ENCODE measurements at regions of chr1 and their contacts with region 1.

Region 1: GRCh38 chr1:26864610-26865527 is 1.9 kb downstream of the SFN start:
- DNase-seq: peak; percentile 96
- H3K4me3 Mint-ChIP-seq: peak overlapping the region; percentile 98
- H3K27ac Mint-ChIP-seq: peak overlapping the region; percentile 98
- H3K4me1 Mint-ChIP-seq: peaks cover 32% of the 10 kb centered on the region
- H3K27me3 Mint-ChIP-seq: no peaks in the 10 kb centered on the region

Region 2: DNA sequence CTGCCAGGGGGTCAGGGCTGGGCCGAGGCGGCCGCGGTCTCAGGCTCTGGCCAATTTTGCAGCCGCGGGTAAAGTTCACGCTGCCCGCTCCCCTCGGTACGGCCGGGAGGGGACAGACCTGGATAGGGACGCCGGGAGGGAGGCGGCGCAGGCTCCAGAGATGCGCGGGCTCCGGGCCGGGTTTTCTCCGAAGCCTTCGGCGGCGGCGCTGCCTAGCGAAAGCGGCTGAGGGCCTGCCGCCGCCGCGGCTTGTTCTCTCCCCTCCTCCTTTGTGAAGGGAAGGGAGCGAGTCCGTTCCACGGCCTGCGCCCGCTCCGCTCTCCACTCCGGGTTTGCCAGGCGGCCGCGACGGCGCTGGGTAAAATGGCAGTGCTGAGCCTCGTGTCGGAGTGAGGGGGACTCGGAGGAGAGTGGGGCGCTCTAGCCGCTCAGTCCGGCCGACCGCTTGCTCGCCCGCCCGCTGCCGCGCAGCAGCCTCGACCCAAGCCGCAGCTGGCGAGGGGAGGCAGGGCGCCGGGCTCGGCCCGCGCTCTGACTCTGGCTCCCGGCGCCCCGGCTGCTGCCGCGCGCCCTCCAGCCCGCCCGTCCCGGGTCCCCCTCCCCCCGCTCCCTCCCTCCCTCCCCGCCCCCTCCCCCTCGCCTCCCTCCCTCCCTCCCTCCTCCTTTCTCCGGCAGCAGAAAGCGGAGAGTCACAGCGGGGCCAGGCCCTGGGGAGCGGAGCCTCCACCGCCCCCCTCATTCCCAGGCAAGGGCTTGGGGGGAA is 169.3 kb before region 1 on chr1 and contains the start of gene ARID1A:
- intact Hi-C with region 1: loop called (anchors 2 kb)
- DNase-seq: peak; percentile 96
- H3K4me3 Mint-ChIP-seq: peak within 1 kb of the TSS; percentile 90
- H3K27ac Mint-ChIP-seq: peak within 1 kb of the TSS; percentile 96
- H3K4me1 Mint-ChIP-seq: peaks cover 31% of the 10 kb centered on the region
- H3K27me3 Mint-ChIP-seq: no peaks in the 10 kb centered on the region
- total RNA-seq, gene ARID1A: 130 and 132 TPM in 2 replicates

Region 3: DNA sequence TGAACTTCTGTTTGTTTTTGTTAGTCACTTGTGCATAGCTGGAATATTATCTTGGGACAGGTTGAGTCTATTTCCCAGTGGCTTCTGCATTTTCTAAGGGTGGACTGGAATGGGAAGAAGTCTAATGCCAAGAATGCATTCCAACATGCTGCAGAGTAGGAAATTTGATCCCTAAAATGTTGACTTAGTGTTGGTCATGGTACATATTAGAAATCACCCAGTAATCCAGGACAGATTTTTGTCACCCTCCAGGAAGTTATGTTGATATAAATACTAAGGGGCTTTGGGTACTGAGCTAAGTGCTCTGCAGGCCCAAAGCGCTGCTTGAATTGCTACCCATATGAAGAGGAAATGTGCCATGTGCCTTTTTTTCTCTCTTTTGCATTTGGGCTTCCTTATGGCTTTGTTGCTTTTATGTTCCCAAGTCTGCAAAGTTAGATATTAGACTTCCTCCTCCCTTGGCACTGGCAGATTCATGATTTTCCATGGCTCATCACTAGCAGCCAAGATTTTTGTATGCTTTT is 159.0 kb before region 1 on chr1:
- intact Hi-C with region 1: no loop called
- DNase-seq: no peak
- H3K4me3 Mint-ChIP-seq: peak overlapping the region; percentile 47
- H3K27ac Mint-ChIP-seq: peak overlapping the region; percentile 47
- H3K4me1 Mint-ChIP-seq: peaks cover 38% of the 10 kb centered on the region
- H3K27me3 Mint-ChIP-seq: no peaks in the 10 kb centered on the region

Region 4: DNA sequence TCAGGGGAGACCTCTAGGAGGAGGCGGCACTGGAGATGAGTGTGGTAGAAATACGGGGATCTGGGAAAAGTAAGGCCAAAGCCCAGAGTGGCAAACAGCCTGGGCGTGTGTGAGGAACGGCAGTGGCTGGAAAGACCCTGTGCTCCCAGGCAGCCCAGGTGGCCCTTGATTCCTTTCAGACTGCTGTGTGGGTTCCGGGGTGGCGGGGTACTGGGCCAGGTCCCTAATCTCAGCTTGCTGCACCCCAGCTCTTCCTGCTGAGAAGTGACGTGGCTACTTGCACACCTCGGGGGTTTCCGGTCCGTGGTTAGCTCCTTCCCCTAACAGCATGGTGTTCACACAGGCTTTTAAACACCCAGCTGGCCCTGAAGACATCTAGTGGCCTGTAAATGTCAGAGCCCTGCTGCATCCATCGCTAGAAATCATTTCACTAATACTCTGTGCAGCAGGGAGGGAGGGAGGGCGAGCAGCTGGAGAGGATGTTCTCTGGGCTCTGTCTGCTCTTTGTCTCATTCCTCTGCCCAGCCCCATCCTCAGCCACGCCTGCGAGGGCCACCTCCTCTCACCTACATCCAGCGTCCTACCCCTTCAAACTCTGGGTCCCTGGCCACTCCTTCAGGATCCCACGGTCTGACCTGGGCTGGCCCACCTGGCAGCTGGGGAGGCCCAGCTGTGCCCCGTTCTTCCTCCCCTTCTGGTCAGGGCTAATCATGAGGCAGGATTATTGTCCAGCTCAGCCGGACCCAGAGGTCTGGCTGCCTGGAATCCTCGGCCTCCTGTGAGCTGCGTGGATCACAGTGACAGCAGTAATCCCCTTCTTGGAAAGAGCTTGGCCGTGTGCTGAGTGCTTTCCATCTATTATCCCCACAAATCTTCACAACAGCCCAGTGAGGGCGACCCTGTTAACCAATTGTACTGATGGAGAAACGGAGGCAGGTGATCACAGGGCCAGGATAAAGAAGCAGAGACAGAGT is 31.1 kb before region 1 on chr1:
- intact Hi-C with region 1: loop called (anchors 1 kb)
- DNase-seq: peak; percentile 89
- H3K4me3 Mint-ChIP-seq: peak overlapping the region; percentile 75
- H3K27ac Mint-ChIP-seq: peak overlapping the region; percentile 99
- H3K4me1 Mint-ChIP-seq: peaks cover 69% of the 10 kb centered on the region
- H3K27me3 Mint-ChIP-seq: no peaks in the 10 kb centered on the region

Region 5: DNA sequence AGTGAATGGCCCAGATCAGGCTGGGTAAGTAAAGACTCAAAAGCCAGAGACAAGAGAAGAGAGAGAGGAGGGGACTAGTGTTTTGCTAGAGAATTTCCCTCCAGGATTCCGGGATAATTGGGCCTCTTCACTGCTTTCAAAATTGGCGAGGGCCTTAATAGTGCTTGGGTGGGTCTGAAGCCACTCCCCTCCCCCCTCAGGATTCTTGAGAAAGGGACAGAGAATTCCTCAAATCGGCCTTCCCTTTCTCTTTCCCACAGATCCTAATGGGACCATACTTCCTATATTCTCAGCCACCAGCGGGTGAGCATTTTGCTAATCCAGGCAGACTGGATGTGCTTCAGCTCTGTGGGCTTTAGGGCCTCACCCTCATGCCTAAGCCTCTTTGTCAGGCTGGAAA is 10.0 kb after region 1 on chr1:
- intact Hi-C with region 1: loop called (anchors 1 kb)
- DNase-seq: no peak
- H3K4me3 Mint-ChIP-seq: no peak overlapping the region
- H3K27ac Mint-ChIP-seq: no peak overlapping the region
- H3K4me1 Mint-ChIP-seq: no peaks in the 10 kb centered on the region
- H3K27me3 Mint-ChIP-seq: no peaks in the 10 kb centered on the region

Region 6: DNA sequence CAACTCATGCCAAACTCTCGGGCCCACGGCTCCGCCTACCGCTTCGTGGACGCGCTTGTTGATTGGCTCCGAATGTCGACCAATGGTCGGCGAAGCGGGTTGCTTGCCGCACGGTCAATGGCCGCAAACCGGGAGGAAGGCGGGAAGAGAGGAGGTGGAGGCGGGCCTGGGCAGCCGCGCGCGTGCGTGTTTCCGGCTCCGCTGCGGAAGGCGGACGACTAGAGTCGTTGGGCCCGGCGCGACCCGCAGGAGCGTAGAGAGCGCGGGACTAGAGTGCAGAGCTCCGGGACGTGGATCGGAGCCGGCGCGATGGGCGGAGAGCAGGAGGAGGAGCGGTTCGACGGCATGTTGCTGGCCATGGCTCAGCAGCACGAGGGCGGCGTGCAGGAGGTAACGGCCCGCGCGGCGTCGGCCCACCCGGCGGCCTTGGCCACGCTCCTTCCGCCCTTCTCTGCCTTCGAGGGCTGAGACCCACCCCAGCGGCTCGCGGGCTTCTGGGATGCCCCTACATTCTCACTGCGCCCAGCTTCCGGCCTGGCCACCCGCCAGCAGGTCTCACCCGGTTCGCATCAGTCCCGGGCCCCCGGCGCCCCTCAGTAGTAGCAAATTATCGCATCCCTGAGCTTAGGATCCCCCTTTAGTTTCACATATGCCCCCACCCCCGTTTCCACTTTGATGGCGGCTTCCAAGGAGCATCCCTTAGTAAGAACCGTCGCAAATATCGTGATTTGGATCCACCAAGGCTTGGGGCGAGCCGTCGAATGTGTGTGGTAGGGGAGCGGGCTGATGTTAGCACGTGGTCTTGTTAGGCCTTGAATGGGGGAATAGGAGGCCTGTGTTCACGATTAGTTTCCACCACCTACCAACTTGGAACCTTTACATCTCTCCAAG is 56.9 kb after region 1 on chr1 and contains the start of gene NUDC:
- intact Hi-C with region 1: loop called (anchors 1 kb)
- DNase-seq: peak; percentile 97
- H3K4me3 Mint-ChIP-seq: peak within 1 kb of the TSS; percentile 97
- H3K27ac Mint-ChIP-seq: peak within 1 kb of the TSS; percentile 96
- H3K4me1 Mint-ChIP-seq: peaks cover 31% of the 10 kb centered on the region
- H3K27me3 Mint-ChIP-seq: peaks cover 2% of the 10 kb centered on the region
- total RNA-seq, gene NUDC: 151 and 152 TPM in 2 replicates

Measured in activated T-helper 1 cell treated with anti-CD3 and anti-CD28 coated beads, Interleukin-12 subunit alpha, Interleukin-12 subunit beta, Interleukin-2, Interleukin-4 antibody, amounts not matched to agents 30 ng/mL and 10 ng/mL and 1 ng/mL, durations not matched to agents 14 hours and 24 hours and 36 hours (primary cell).